GM10248 (cell line): ENCODE measurements at regions of chr14 and their contacts with region 1.

Region 1: GRCh38 chr14:59215325-59216181 is 27.1 kb downstream of the DAAM1 start:
- DNase-seq: no peak
- CTCF ChIP-seq: no peak

Region 2: DNA sequence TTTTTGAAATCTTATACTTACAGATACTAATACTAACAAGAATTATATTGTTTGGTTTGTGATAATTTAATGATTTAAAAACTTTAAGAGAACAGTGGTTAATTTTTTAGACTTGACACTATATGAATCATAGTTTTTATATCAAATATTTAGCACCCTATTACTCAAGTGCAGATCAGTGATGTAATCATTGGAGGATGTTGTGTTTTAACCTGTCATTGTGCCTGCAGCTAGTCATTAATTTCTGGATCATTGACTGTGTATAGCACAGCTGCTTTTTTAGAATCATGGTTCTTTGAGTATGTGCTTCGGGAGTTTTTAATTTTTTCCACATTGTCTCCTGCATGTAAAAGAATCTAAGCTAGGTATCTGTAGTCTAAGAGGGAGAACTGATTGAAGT is 899.9 kb before region 1 on chr14:
- CTCF ChIA-PET with region 1: no interaction called
- POLR2A ChIA-PET with region 1: interaction called, 10 read pairs
- DNase-seq: no peak
- CTCF ChIP-seq: no peak